AG04449 (cell line): ENCODE measurements at regions of chr2 and their contacts with region 1.

Region 1: GRCh38 chr2:215283221-215283620 is 28.6 kb upstream of the ATIC start:
- DNase-seq: no peak
- H3K4me3 ChIP-seq: no peak overlapping the region
- CTCF ChIP-seq: no peak

Region 2: DNA sequence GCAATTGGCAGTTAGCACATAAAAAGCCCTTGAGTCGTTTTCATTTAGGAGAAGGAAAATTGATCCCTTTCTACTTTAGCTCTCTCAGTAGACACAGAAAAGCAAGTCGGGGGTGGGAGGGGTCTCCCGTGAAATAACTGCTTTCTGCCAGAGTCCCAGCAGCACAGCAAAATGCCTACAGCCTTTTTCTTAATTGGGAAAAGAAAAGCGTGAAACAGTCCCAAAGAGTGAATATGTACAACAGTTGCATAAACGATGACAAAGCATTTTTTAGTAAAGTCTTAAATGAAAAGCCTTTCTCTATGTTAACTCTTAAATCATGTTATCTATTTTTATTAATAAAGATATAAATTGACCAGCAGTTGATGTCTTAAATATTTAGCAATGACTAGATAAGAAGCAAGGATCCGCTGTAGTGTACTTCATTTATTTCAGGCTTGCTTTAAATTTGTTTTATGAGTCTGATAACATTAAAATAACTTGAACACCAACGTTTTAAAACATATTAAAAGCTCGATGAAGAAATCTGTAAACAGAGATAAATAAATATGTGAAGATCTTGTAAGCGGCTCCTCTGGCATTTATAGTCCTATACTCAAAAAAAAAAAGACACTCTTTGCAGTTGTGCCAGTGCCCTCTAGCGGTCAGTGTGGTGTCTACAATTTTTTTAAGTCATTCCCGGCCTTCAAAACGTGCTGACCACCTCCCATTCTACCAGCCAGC is 13.7 kb before region 1 on chr2:
- CTCF ChIA-PET with region 1: interaction called, 16 read pairs
- POLR2A ChIA-PET with region 1: no interaction called
- DNase-seq: peak; percentile 21
- H3K4me3 ChIP-seq: no peak overlapping the region
- CTCF ChIP-seq: peak; percentile 64

Region 3: DNA sequence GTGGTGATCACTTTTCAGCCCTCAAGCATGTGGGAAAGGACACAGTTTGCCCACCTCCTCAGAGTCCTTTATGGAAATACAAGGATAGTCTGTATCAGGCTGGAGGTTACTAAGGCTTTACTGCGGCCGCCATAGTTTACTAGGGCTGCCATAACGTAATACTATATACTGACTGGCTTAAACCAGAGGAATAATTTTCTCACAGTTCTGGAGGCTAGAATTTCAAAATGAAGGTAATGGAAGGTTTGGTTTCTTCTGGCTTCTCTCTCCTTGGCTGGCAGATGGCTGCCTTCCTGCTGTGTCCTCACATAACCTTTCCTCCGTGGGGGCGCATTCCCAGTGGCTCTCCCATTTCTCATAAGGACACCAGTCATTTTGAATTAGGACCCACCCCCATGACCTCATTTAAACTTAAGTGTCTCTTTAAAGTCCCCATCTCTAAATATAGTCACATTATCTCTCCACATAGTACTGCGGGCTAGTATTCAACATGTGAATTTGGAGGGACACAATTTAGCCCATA is 16.2 kb after region 1 on chr2:
- CTCF ChIA-PET with region 1: no interaction called
- POLR2A ChIA-PET with region 1: no interaction called
- DNase-seq: no peak
- H3K4me3 ChIP-seq: no peak overlapping the region
- CTCF ChIP-seq: no peak